Endothelial cell of umbilical vein (primary cell): ENCODE measurements at regions of chr18 and their contacts with region 1.

Region 1: DNA sequence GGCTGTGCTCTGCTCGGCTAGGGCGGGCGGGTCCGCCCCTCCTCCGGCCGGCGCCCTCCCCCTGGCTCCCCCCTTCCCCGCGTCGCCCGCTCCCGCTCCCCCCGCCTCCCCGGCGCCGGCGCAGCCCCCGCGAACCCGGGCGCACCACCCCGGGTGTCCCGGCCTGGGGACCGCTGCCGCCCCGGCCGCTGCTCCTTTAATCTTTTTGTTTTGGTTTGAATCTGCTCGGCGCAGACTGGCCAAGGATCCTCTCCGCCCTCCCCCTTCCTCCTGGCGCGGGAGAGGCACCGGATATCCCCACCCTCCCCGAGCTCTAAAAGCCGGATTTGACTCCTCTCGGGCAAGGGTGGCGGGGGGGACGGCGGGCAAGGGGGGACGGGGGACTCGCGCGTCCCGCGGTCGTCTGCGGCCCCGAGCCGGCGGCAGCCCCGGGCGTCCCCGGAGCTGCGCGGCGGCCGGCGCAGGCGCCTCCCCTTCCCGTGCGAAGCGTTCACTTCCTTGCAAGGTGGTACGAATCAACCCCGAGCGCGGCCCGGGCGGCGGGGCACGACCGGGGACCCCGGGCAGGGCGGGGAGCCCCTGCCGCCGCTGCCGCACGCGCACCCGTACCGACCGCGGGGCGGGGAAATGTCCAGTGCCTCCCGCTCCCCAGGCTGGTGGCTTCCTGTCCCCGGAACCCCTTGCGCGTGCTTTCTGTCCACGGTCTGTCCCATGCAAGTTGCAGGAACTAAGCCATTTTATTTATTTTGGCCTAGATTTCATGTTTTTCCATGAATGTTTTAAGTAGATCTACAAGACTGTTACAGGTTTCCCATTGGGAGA is at the start of gene PTGR3:
- DNase-seq: peak; percentile 89
- H3K4me3 ChIP-seq: peak within 1 kb of the TSS; percentile 73 to 97 (median 83)
- H3K27ac ChIP-seq: peak within 1 kb of the TSS; percentile 88
- H3K4me1 ChIP-seq: peaks cover 46% of the 10 kb centered on the region
- H3K27me3 ChIP-seq: no peaks in the 10 kb centered on the region
- CTCF ChIP-seq: no peak
- POLR2A ChIP-seq: no peak
- total RNA-seq, gene PTGR3: 18.3 and 21.9 TPM in 2 replicates

Region 2: GRCh38 chr18:74495581-74496507 is 713.5 kb before region 1 on chr18 and contains the start of gene CNDP2:
- CTCF ChIA-PET with region 1: no interaction called
- POLR2A ChIA-PET with region 1: no interaction called
- dilution Hi-C with region 1: no loop called
- intact Hi-C with region 1: loop called (anchors 10 kb)
- DNase-seq: peak; percentile 99
- H3K4me3 ChIP-seq: peak within 1 kb of the TSS; percentile 52 to 89 (median 74)
- H3K27ac ChIP-seq: peak within 1 kb of the TSS; percentile 59
- H3K4me1 ChIP-seq: peaks cover 11% of the 10 kb centered on the region
- H3K27me3 ChIP-seq: peaks cover 12 to 20% of the 10 kb centered on the region in 2 experiments
- CTCF ChIP-seq: no peak
- POLR2A ChIP-seq: peak; percentile 45
- total RNA-seq, gene CNDP2: 121 and 123 TPM in 2 replicates

Region 3: DNA sequence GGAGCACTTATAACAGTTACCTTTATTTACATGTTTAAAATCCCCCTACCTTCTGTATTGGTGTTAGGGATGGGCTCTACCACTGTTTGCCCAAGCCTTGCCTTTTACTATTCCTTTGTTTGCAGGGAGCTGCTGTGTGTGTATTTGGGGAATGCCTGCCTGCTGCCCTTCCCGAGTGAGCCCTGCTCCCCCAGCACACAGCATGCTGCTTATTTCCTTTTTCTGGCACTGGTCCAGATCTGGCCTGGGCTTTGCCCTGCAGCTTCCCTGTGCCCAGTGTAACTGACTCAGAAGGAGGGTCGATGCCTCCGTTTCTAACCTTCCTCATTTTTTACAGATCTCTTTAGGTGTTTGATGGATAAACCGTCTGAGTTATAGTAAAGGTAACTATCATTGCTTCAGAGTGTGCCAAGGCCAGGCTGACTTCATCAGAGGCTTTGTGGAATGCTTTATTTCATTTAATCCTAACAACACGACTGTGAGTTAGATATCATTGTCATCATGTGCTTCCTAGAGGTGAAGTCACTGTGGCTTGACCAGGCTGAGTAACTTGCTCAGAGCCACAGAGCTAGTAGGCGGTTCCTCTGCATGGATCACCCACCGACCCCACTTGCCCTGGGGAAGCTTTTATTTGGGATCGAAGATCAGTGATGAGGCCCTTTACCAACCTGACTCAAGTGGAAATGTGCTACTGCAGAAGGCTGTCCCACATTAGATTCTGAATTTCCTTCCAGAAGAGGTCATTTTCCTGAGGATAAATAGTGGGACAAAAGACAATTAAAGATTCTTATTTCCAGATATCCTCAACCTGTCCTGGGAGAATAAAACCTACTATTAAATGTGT is 372.8 kb before region 1 on chr18:
- CTCF ChIA-PET with region 1: no interaction called
- POLR2A ChIA-PET with region 1: no interaction called
- dilution Hi-C with region 1: no loop called
- intact Hi-C with region 1: loop called (anchors 10 kb)
- DNase-seq: peak; percentile 69
- H3K4me3 ChIP-seq: no peak overlapping the region
- H3K27ac ChIP-seq: peak overlapping the region; percentile 21
- H3K4me1 ChIP-seq: peaks cover 37% of the 10 kb centered on the region
- H3K27me3 ChIP-seq: no peaks in the 10 kb centered on the region
- CTCF ChIP-seq: no peak
- POLR2A ChIP-seq: no peak

Region 4: DNA sequence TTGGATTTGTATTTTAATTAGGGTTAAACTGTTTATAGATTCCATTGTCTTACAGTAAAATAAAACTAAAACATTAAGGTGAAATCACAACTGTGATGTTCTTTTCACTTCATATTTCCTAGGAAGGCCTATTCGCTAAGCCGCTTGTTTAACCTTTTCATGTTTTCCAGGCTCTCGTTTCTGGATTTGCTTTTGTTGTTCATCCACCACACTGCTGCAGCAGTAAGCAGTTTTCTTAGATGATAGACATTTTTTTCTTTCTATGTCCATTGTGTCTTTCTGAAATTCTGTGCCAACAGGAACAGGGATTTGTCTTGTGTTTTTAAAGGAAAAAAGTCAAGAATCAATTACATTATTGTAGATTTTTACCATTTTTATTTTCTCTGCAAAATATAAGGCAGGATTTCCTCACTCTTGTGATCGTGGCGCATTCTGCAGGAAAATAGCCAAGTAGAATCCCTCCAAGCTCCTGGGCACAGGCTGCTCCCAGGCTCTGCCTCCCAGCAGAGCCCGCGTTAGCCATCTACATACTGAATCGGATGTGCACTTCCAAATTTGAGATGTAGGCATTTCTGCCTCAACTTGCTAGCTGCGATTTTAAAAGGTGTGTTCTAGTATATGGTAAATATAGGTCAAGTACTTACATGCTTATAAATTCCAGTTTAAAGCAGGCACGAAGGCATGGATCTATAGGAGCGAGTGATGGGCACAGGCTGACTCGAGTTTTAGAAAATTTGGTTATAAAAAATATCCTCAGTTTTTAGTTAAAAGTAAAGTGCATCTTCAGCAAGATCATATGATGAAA is 11.4 kb after region 1 on chr18:
- CTCF ChIA-PET with region 1: interaction called, 3 read pairs
- POLR2A ChIA-PET with region 1: no interaction called
- dilution Hi-C with region 1: no loop called
- intact Hi-C with region 1: loop called (anchors 1 kb)
- DNase-seq: no peak
- H3K4me3 ChIP-seq: no peak overlapping the region
- H3K27ac ChIP-seq: no peak overlapping the region
- H3K4me1 ChIP-seq: peaks cover 25% of the 10 kb centered on the region
- H3K27me3 ChIP-seq: no peaks in the 10 kb centered on the region
- CTCF ChIP-seq: no peak
- POLR2A ChIP-seq: no peak

Region 5: GRCh38 chr18:75267643-75268363 is 58.5 kb after region 1 on chr18:
- CTCF ChIA-PET with region 1: no interaction called
- POLR2A ChIA-PET with region 1: no interaction called
- dilution Hi-C with region 1: no loop called
- intact Hi-C with region 1: loop called (anchors 5 kb)
- DNase-seq: peak; percentile 83
- H3K4me3 ChIP-seq: no peak overlapping the region
- H3K27ac ChIP-seq: no peak overlapping the region
- H3K4me1 ChIP-seq: peaks cover 19% of the 10 kb centered on the region
- H3K27me3 ChIP-seq: no peaks in the 10 kb centered on the region
- CTCF ChIP-seq: no peak
- POLR2A ChIP-seq: no peak

Region 6: GRCh38 chr18:75478996-75479880 is 269.9 kb after region 1 on chr18:
- CTCF ChIA-PET with region 1: interaction called, 6 read pairs
- POLR2A ChIA-PET with region 1: no interaction called
- dilution Hi-C with region 1: no loop called
- intact Hi-C with region 1: loop called (anchors 2 kb)
- DNase-seq: peak; percentile 66
- H3K4me3 ChIP-seq: no peak overlapping the region
- H3K27ac ChIP-seq: no peak overlapping the region
- H3K4me1 ChIP-seq: peaks cover 4% of the 10 kb centered on the region
- H3K27me3 ChIP-seq: no peaks in the 10 kb centered on the region
- CTCF ChIP-seq: peak; percentile 48 to 55
- POLR2A ChIP-seq: no peak